ENCODE measurements at regions of chr20 and their contacts with region 1.

Region 1: DNA sequence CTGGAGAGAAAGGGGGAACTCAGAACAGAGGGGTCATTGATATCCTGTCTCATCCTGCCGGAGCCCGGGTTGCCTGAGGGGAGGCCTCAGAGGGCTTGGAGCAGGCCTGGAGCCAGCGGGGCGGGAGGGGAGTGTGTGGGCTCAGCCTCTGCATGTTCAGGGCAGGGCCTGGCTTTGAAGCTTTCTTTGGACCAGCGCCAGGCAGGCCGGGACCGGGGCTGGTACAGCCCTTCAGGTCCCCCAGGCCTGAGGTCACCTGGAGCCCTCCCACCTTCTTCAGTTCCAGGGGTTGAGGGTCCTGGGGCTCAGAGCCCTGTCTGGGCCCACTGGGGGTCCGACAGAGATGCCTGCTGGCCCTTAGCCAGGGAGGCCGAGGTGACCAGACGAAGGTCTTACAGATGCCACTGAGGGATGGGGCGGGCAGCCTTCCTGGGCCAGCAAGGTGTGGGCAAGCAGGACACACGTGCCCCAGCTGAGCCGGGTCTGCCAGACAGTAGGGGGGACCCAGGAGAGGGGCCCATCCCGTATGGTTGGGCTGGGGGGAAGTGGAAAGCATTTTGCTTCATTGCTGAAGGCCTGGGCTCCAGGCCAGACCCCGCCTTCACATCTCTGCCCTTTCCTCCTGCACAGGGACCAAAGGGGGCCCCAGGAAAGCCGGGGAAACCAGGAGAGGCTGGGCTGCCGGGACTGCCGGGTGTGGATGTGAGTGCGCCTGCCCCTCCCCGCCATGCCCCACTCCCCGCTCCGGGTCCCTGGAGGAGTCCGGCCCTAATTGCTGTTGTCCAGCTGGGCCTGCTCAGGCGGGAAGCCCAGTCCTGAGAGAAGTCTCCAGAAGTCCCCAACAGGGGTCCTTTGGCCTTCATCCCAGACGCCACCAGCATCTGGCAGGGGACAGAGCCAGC is 2.0 kb downstream of the COL9A3 start:
- DNase-seq: peak; percentile 52
- H3K4me3 ChIP-seq: no peak overlapping the region
- H3K27ac ChIP-seq: no peak overlapping the region
- H3K4me1 ChIP-seq: peaks cover 39% of the 10 kb centered on the region
- H3K27me3 ChIP-seq: peaks cover 7% of the 10 kb centered on the region
- CTCF ChIP-seq: no peak

Region 2: GRCh38 chr20:62755817-62756724 is 62.8 kb before region 1 on chr20:
- CTCF ChIA-PET with region 1: no interaction called
- dilution Hi-C with region 1: loop called (anchors 5 kb)
- in situ Hi-C with region 1: no loop called
- intact Hi-C with region 1: no loop called
- DNase-seq: no peak
- H3K4me3 ChIP-seq: no peak overlapping the region
- H3K27ac ChIP-seq: no peak overlapping the region
- H3K4me1 ChIP-seq: peaks cover 10% of the 10 kb centered on the region
- H3K27me3 ChIP-seq: no peaks in the 10 kb centered on the region
- CTCF ChIP-seq: no peak

Region 3: DNA sequence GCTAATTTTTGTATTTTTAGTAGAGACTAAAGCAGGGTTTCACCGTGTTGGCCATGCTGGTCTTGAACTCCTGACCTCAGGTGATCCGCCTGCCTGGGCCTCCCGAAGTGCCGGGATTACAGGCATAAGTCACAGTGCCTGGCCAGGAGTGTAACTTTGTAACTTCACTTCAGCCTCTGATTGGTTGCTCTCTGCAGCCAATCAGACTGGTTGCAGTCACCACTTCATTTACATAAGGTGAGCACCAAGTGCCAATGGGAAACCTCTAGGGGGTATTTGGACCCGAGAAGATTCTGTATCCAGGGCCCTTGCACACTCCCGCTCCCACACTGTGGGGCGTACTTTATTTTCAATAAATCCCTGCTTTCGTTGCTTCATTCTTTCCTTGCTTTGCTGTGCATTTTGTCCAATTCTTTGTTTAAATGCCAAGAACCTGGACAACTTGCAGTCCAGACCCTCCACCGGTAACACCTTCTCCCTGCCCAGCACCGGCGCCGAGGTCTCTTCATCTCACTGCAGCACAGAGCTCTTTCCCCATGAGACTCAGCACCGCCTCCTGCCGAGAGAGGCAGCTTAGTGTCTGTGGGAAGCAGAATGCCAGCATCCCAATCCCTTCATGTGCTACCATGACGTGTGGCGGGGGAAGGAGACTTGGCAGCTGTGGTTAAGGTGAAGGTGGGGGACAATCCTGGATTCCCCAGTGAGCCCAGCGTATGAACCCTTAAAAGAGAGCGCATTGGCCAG is 36.5 kb before region 1 on chr20:
- CTCF ChIA-PET with region 1: no interaction called
- dilution Hi-C with region 1: no loop called
- in situ Hi-C with region 1: no loop called
- intact Hi-C with region 1: no loop called
- DNase-seq: no peak
- H3K4me3 ChIP-seq: no peak overlapping the region
- H3K27ac ChIP-seq: no peak overlapping the region
- H3K4me1 ChIP-seq: no peaks in the 10 kb centered on the region
- H3K27me3 ChIP-seq: no peaks in the 10 kb centered on the region
- CTCF ChIP-seq: no peak

Region 4: DNA sequence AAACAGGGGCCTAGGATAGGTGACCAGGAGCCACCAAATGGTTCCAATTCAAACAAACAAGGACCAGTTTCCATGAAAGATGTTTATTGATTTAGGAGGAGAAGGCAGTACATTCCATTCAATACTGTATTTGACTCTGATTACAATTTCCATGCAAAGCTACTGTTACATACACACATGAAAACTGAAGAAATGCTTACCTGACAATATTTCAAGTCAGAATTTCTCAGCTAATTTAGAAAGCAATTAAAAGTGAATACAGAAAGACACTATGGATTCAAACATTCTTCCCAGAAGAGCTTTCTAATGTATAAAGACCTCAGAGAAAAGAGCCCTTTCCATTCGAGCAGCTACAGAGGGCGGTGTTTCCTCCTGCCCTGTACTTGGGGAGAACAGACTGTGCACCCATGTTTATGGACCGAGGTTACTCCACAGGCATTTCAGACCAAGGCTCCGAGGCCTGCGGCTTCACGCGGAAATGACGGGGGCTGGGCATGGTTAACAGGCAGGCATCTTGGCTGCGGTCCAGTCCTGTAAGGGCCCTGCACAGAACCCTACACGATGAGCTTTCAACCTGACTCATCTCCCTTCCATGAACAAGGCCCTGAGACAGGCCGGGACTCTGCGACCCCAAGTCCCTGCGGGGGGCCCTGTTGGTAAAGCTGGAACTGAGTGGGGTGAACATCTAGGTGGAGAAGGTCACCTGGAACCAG is 68.5 kb after region 1 on chr20:
- CTCF ChIA-PET with region 1: no interaction called
- dilution Hi-C with region 1: no loop called
- in situ Hi-C with region 1: no loop called
- intact Hi-C with region 1: no loop called
- DNase-seq: peak; percentile 75
- H3K4me3 ChIP-seq: no peak overlapping the region
- H3K27ac ChIP-seq: no peak overlapping the region
- H3K4me1 ChIP-seq: no peaks in the 10 kb centered on the region
- H3K27me3 ChIP-seq: no peaks in the 10 kb centered on the region
- CTCF ChIP-seq: no peak

Measured in mammary epithelial cell (primary cell).